ENCODE measurements at regions of chr12 and their contacts with region 1.

Region 1: DNA sequence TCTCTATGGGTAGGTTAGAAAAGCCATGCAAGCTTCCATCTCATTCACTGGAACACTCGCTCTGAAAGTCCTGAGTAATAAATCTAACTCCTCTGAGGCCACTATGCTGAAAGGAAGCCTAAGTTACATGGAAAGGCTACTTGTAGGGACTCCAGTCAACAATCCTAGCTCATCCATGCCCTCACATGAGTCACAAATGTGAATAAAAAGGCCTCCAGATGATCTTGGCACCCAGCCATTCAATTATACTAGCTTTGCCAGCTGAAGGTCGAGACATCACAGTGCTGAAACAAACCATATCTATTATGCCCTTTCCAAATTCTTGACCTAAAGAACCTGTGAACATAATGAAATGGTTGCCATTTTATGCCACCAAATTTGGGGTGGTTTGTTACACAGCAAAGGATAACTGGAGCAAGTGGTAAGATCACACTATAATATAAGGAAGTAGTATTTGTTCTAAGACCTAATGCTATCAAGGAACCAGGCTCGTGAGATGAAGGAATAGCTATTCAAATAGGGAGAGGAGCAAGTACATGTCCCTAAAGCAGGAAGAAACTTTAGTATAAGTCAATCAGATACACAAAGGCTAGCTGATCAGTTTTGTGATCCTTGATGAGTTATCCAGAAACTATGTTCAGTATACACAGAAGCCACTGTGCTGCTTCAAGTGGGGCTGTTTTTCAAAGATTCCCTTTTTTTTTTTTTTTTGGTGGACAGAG is 142.1 kb downstream of the MED13L start:
- DNase-seq: no peak
- H3K4me3 Mint-ChIP-seq: peak overlapping the region; percentile 25
- H3K27ac Mint-ChIP-seq: peak overlapping the region; percentile 98
- H3K4me1 Mint-ChIP-seq: peaks cover 59% of the 10 kb centered on the region
- H3K27me3 Mint-ChIP-seq: no peaks in the 10 kb centered on the region

Region 2: DNA sequence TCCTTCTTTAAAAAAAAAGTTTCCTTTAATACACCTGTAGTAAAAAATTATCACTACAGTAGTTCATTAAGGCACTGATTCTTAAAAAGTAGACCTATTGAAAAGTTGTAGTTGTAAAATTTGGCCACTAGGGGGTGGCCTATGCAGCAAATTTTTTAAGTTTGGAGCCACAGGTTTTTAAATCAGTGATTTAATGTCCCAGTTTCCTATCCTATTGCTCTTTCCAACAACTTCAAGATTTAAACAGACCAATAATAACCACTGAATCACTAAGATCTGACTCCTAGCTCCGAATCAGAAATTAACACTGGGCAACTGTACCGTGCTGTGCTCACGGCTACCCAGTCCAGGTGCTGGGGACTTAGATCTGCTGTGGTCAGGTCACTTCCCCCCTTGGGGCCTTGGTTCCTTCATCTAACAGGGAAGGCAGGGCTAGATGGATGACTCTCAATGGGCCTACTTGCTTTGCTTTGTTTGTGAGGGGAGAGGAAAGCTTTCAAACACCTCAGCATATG is 137.2 kb before region 1 on chr12:
- intact Hi-C with region 1: no loop called
- DNase-seq: peak; percentile 65
- H3K4me3 Mint-ChIP-seq: no peak overlapping the region
- H3K27ac Mint-ChIP-seq: no peak overlapping the region
- H3K4me1 Mint-ChIP-seq: peaks cover 4% of the 10 kb centered on the region
- H3K27me3 Mint-ChIP-seq: no peaks in the 10 kb centered on the region

Region 3: DNA sequence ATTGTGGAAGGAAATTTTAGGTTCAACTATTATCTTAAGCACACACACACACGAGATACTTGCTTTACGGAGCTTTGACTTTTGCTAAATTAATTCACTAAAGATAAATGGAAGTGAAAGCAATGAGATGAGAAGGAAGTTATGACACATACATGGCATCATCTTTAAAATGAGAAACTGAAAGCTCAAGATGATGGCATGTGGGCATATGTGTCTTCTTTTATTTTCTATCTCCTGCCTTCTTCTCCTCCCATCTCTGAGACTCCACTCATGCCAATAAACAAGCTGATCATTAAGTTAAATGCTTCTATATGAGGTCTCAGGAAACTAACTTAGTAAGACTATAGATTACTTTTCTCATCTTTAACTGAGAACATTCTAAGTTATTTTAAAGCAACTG is 74.6 kb before region 1 on chr12:
- intact Hi-C with region 1: loop called (anchors 2 kb)
- DNase-seq: peak; percentile 69
- H3K4me3 Mint-ChIP-seq: peak overlapping the region; percentile 81
- H3K27ac Mint-ChIP-seq: peak overlapping the region; percentile 91
- H3K4me1 Mint-ChIP-seq: peaks cover 22% of the 10 kb centered on the region
- H3K27me3 Mint-ChIP-seq: no peaks in the 10 kb centered on the region

Region 4: GRCh38 chr12:116066381-116067230 is 68.8 kb before region 1 on chr12:
- intact Hi-C with region 1: loop called (anchors 2 kb)
- DNase-seq: peak; percentile 85
- H3K4me3 Mint-ChIP-seq: no peak overlapping the region
- H3K27ac Mint-ChIP-seq: no peak overlapping the region
- H3K4me1 Mint-ChIP-seq: peaks cover 6% of the 10 kb centered on the region
- H3K27me3 Mint-ChIP-seq: no peaks in the 10 kb centered on the region

Region 5: GRCh38 chr12:116087962-116088361 is 47.4 kb before region 1 on chr12:
- intact Hi-C with region 1: loop called (anchors 5 kb)
- DNase-seq: peak; percentile 58
- H3K4me3 Mint-ChIP-seq: peak overlapping the region; percentile 25
- H3K27ac Mint-ChIP-seq: peak overlapping the region; percentile 27
- H3K4me1 Mint-ChIP-seq: peaks cover 39% of the 10 kb centered on the region
- H3K27me3 Mint-ChIP-seq: no peaks in the 10 kb centered on the region

Region 6: GRCh38 chr12:116099652-116100432 is 35.5 kb before region 1 on chr12:
- intact Hi-C with region 1: loop called (anchors 5 kb)
- DNase-seq: no peak
- H3K4me3 Mint-ChIP-seq: no peak overlapping the region
- H3K27ac Mint-ChIP-seq: peak overlapping the region; percentile 53
- H3K4me1 Mint-ChIP-seq: peaks cover 23% of the 10 kb centered on the region
- H3K27me3 Mint-ChIP-seq: no peaks in the 10 kb centered on the region

Region 7: GRCh38 chr12:116123451-116124258 is 11.7 kb before region 1 on chr12:
- intact Hi-C with region 1: loop called (anchors 1 kb)
- DNase-seq: peak; percentile 66
- H3K4me3 Mint-ChIP-seq: peak overlapping the region; percentile 24
- H3K27ac Mint-ChIP-seq: no peak overlapping the region
- H3K4me1 Mint-ChIP-seq: peaks cover 26% of the 10 kb centered on the region
- H3K27me3 Mint-ChIP-seq: no peaks in the 10 kb centered on the region

Measured in activated CD4-positive, alpha-beta T cell treated with anti-CD3 and anti-CD28 coated beads, Interleukin-2, amount 10 ng/mL, durations not matched to agents 24 days and 14 days (primary cell).